ENCODE measurements at regions of chr1 and their contacts with region 1.

Region 1: GRCh38 chr1:202184750-202185460 is 8.7 kb upstream of the LGR6 start:
- DNase-seq: peak; percentile 82 to 95
- H3K4me3 ChIP-seq: no peak overlapping the region
- H3K4me1 ChIP-seq: no peaks in the 10 kb centered on the region
- H3K27me3 ChIP-seq: no peaks in the 10 kb centered on the region

Region 2: DNA sequence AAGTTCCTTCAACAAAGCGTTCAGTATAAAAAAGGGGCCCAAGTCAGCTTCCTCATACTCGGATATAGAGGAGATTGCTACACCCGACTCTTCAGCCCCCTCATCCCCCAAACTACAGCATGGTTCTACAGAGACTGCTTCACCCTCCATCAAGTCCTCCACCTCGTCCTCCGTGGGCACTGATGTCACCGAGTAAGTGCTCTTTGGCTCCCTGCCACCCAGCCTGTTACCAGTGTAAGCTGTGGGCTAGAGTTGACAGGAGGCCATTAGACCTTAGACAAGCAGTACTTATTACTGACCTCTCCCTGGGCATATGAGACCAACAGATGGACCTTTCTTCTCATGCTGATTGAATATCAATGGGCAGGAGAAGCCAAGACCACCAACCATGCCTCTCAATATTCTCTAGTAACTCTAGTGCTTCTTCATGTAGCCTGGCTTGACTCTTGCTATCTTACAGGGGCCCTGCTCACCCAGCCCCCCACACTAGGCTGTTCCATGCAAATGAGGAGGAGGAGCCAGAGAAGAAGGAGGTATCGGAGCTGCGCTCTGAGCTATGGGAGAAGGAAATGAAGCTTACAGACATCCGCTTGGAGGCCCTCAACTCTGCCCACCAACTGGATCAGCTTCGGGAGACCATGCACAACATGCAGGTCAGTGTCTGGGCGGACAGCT is 376.8 kb before region 1 on chr1:
- in situ Hi-C with region 1: no loop called
- DNase-seq: no peak
- H3K4me3 ChIP-seq: no peak overlapping the region
- H3K4me1 ChIP-seq: no peaks in the 10 kb centered on the region
- H3K27me3 ChIP-seq: no peaks in the 10 kb centered on the region

Region 3: GRCh38 chr1:202315576-202316168 is 130.8 kb after region 1 on chr1:
- in situ Hi-C with region 1: loop called (anchors 5 kb)
- DNase-seq: peak; percentile 53 to 86
- H3K4me3 ChIP-seq: no peak overlapping the region
- H3K4me1 ChIP-seq: no peaks in the 10 kb centered on the region
- H3K27me3 ChIP-seq: no peaks in the 10 kb centered on the region

Region 4: DNA sequence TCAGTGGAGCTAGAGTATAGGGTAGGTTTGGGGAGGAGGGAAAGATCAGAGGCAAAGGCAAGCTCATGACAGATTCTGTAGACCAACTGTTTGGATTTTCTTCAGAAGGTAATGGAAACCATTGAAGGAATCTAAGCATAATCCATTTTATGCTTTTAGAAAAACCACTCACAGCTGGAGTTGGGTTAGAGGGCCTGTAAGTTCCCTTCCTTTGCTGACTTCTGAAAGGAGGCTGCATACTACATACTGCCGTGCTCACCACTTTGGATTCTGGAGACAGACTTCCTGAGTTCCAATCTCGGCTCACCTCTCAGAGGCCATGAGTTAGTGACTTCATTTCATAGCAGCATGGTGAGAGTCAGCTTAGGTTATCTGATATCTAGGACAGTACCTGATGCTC is 531.7 kb after region 1 on chr1:
- in situ Hi-C with region 1: loop called (anchors 5 kb)
- DNase-seq: no peak
- H3K4me3 ChIP-seq: no peak overlapping the region
- H3K4me1 ChIP-seq: no peaks in the 10 kb centered on the region
- H3K27me3 ChIP-seq: peaks cover 3% of the 10 kb centered on the region

Measured in HAP-1 (cell line).